Head of caudate nucleus (tissue), 42 donors: ENCODE measurements at regions of chr10 and their contacts with region 1.

Region 1: GRCh38 chr10:102641880-102642735 is 2.2 kb upstream of the TRIM8 start:
- DNase-seq: peak; percentile 96 to 100 (median 99)

Region 2: GRCh38 chr10:102322914-102323313 is 319.2 kb before region 1 on chr10:
- intact Hi-C with region 1: no loop called
- DNase-seq: no peak

Region 3: DNA sequence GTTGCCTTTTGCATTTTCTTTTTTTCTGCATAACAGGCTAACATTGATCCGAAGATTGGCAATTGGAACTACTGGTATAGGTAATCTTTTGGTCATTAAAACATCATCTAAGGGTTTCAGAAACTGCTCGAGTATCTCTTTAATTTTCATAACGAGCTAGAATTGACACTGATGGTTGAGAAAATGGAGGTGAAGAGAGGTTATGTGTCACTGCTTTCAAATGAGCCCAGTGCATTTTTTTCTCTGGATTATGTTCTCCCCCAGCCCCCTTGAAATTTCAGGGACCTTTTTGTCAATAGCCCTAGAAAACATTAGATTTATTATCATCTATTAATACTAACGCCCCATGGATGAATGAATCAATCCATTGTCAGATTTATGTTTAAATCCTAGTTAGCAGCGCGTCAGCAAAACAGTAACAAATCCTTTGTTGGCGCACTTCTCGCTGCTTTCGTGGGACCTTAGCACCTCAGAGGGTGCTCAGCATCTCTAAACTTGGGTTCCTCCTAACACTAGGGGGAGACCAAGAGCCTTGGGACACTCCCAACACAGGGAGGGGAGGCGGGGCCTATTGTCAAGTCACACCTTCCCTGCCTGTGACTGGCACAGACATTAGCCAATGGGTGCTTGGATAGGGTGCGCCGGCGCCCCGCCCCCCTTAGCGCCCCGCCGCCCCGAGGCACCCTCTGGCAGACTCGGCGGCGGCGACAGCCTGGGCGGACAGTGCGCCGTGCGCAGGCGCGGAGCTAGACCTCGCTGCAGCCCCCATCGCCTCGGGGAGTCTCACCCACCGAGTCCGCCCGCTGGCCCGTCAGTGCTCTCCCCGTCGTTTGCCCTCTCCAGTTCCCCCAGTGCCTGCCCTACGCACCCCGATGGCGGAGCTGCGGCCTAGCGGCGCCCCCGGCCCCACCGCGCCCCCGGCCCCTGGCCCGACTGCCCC is 138.6 kb before region 1 on chr10 and contains the start of gene SUFU:
- intact Hi-C with region 1: loop called (anchors 2 kb)
- DNase-seq: peak; percentile 97 to 100 (median 99)

Region 4: GRCh38 chr10:102678842-102679289 is 36.8 kb after region 1 on chr10:
- intact Hi-C with region 1: loop called (anchors 5 kb)
- DNase-seq: peak; percentile 70 to 92 (median 84)

Region 5: DNA sequence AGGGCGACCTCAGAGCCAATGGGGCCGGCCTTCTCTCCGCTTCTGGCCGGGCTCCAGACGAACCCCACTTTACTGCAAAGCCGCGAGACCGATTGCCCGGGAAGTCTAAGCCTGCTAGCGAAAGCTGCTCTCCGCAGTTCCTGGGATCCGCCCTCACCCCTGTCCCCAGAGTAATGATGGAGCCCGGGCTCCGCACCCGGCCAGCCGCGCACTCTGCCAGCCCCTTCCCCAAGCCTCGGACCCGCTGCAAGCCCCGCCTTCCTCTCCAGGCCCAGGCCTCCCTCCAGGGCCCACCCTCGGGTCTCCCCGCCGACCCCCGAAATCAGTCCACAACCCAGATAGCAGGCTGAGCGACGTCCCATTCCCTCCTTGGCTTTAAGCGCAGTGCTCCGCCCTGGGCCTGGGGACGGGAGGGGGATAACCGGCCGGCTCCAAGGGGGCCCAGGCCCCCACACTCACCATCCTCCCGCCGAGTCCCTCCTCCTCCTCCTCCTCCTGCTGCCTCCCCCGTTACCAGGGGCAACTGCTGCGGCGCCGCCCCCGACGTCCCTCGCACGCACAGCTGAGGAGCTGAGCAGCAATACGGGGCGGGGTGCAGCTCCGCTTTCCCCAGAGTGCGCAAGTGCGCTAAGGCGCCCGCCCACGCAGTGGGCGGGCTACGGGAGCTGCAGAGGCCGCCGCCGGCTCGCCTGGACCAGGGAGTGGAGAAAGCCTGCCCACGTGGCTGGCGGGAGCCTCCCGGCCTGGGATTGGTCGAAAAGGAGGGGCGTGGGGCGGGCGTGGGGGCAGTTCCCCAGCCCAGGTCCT is 71.9 kb after region 1 on chr10 and contains the start of gene ARL3:
- intact Hi-C with region 1: loop called (anchors 5 kb)
- DNase-seq: peak; percentile 92 to 99 (median 98)